Prostate gland (tissue), 2 donors: ENCODE measurements at regions of chr2 and their contacts with region 1.

Region 1: DNA sequence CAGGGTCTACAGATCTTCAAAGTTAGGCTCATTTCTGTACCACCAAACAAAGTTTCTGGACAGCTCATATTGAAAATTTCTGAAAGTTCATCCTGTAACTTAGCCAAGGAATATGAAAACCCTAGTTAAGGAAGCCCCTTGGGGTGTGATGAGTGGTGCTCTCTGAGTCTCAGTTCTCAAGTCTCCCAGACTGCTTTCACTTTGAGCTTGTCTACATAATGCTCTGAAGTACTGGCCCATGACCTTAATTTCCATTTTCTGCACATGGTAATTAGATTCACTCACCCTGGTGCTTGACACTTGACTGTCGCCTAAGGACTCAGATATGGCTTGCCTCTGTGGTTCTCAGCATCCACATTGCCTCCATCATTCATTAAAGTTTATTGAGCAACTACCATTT is 51.7 kb upstream of the SATB2 start:
- DNase-seq: no peak
- H3K4me3 ChIP-seq: no peak overlapping the region
- H3K27ac ChIP-seq: no peak overlapping the region
- H3K4me1 ChIP-seq: no peaks in the 10 kb centered on the region
- H3K27me3 ChIP-seq: no peaks in the 10 kb centered on the region
- CTCF ChIP-seq: no peak
- POLR2A ChIP-seq: no peak

Region 2: DNA sequence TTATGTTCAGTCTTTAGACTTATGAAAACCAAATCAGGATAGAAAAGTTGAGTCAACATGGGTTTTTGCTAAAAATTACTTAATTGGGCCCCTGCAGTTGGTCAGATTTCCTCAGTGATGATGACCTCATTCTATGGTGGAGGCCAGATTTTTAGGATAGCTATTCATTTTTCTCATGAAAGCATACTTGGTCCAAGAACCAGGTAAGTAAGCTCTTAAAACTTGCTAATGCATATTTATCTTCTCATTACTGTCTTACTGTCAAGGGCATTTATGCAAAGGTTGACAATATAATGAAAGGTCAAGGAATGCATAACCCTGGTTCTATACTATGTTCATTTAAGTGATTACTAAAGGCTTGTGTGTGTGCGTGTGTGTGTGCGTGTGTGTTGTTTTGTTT is 702.3 kb before region 1 on chr2:
- intact Hi-C with region 1: loop called (anchors 10 kb)
- DNase-seq: no peak
- H3K4me3 ChIP-seq: no peak overlapping the region
- H3K27ac ChIP-seq: no peak overlapping the region
- H3K4me1 ChIP-seq: no peaks in the 10 kb centered on the region
- H3K27me3 ChIP-seq: no peaks in the 10 kb centered on the region
- CTCF ChIP-seq: no peak
- POLR2A ChIP-seq: no peak